Upper lobe of right lung (tissue), 1 donor: ENCODE measurements at regions of chr3 and their contacts with region 1.

Region 1: GRCh38 chr3:47475570-47476329 is at the start of gene SCAP:
- DNase-seq: peak; percentile 98
- ATAC-seq: peak; percentile 98
- H3K4me3 ChIP-seq: peak within 1 kb of the TSS; percentile 93
- H3K27ac ChIP-seq: peak within 1 kb of the TSS; percentile 86
- H3K4me1 ChIP-seq: peaks cover 21% of the 10 kb centered on the region
- H3K27me3 ChIP-seq: no peaks in the 10 kb centered on the region
- CTCF ChIP-seq: peak; percentile 96
- total RNA-seq, gene SCAP: 66.5 TPM

Region 2: GRCh38 chr3:47420511-47421484 is 55.0 kb before region 1 on chr3:
- intact Hi-C with region 1: loop called (anchors 5 kb)
- DNase-seq: peak; percentile 90
- ATAC-seq: peak; percentile 88
- H3K4me3 ChIP-seq: no peak overlapping the region
- H3K27ac ChIP-seq: peak overlapping the region; percentile 75
- H3K4me1 ChIP-seq: peaks cover 12% of the 10 kb centered on the region
- H3K27me3 ChIP-seq: no peaks in the 10 kb centered on the region
- CTCF ChIP-seq: peak; percentile 90